Heart right ventricle (tissue), 16 donors: ENCODE measurements at regions of chr16 and their contacts with region 1.

Region 1: DNA sequence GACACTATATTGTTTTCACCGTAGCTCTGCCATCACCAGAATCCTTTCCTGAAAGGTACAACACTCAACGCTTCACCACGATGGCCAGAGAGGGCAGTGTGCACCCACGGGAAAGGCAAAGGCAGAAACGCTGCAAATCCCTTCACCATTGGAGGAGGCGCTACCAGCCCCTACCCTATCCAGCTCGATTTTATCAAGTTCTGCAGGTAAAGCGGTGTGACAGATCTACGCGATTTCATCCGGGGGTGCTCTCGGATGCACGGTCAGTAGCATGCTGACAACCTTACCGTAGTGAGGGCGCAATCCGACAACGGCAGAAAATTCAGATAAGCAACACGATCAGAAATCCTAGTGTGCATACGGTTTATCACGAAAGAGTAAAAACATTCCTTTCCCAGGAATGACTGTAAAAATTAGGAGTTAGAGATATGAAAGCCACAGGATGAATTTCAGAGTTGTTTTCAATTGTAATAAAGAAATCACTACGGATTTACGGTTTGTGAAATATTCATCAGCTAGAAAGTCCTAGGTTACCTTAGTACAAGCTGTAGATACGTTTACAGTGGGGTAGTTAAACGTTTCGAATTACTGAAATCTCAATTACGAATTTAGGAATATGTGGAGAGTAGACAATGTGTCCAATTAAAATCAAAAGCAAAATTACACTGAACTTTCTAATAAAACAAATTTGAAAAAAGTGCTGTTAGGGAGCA is 1.8 kb downstream of the NETO2 start:
- DNase-seq: peak; percentile 77 to 80
- ATAC-seq: peak; percentile 78 to 96 (median 90)
- H3K4me3 ChIP-seq: peak overlapping the region; percentile 13 to 69 (median 60)
- H3K27ac ChIP-seq: peak overlapping the region in 3 of 10 donors; percentile 71 to 82 (median 77)
- H3K4me1 ChIP-seq: peaks cover 0 to 19% (median 6%) of the 10 kb centered on the region in 9 donors
- H3K27me3 ChIP-seq: peaks cover 0 to 16% (median 0%) of the 10 kb centered on the region in 7 donors
- CTCF ChIP-seq: peak; percentile 77 to 98 (median 90)

Region 2: DNA sequence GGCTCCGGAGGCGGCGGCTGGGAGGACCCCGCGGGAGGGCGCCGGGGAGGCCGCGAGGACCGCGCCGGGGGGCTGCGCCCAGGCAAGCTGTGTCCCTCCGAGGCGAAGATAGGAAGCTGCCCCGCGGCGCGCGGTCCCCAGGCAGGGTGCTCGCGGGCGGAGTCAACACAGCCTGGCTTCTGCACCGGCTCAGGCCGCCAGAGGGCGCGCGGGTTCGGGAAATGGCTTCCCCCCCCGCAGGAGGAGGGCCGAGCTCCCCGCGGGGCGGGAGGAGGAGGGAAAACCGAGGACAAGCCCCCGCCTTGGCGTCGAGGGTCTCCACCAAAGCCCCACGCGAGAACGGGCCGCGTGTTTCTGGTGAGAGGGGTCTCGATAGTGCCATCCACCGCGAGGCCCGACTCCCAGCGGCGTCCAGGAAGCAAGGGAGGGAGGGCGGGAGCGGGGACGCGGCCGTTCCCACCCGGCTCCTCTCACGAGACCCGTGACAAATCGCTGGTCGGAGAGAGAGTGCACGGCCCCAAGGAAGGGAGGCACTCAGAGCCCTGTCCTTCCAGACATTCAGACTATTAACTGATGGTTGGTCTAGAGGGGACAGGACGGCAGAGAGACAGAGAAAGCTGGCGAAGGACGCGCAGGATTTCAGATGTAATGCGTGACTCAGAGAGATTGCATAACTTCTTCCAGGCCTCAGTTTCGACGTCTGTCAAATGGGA is 104.0 kb before region 1 on chr16:
- intact Hi-C with region 1: loop called in 6 of 10 experiments (anchors 5 kb)
- DNase-seq: peak; percentile 89 to 94
- ATAC-seq: peak; percentile 96 to 99 (median 98)
- H3K4me3 ChIP-seq: peak overlapping the region; percentile 41 to 77 (median 66)
- H3K27ac ChIP-seq: peak overlapping the region in 7 of 10 donors; percentile 8 to 81 (median 57)
- H3K4me1 ChIP-seq: peaks cover 0 to 13% (median 4%) of the 10 kb centered on the region in 9 donors
- H3K27me3 ChIP-seq: peaks cover 0 to 7% (median 0%) of the 10 kb centered on the region in 7 donors
- CTCF ChIP-seq: peak; percentile 77 to 98 (median 93)

Region 3: GRCh38 chr16:47197536-47198179 is 55.7 kb after region 1 on chr16:
- intact Hi-C with region 1: loop called in 1 of 10 experiments (anchors 2 kb)
- DNase-seq: peak; percentile 51 to 66
- ATAC-seq: peak; percentile 73 to 98 (median 91)
- H3K4me3 ChIP-seq: no peak overlapping the region
- H3K27ac ChIP-seq: no peak overlapping the region
- H3K4me1 ChIP-seq: peaks cover 0 to 16% (median 10%) of the 10 kb centered on the region in 9 donors
- H3K27me3 ChIP-seq: no peaks in the 10 kb centered on the region
- CTCF ChIP-seq: no peak

Region 4: GRCh38 chr16:47460711-47461597 is 319.0 kb after region 1 on chr16 and contains the starts of genes ITFG1 and PHKB:
- intact Hi-C with region 1: loop called in 2 of 10 experiments (anchors 2 to 10 kb)
- DNase-seq: peak; percentile 93
- ATAC-seq: peak; percentile 93 to 97 (median 96)
- H3K4me3 ChIP-seq: peak within 1 kb of the TSS; percentile 53 to 97 (median 88)
- H3K27ac ChIP-seq: peak within 1 kb of the TSS; percentile 98 to 100 (median 99)
- H3K4me1 ChIP-seq: peaks cover 10 to 68% (median 57%) of the 10 kb centered on the region in 9 donors
- H3K27me3 ChIP-seq: no peaks in the 10 kb centered on the region
- CTCF ChIP-seq: peak in 4 of 9 donors; percentile 21 to 31 (median 26)
- total RNA-seq, gene ITFG1: 64.2 to 94.5 (median 75.4) TPM
- total RNA-seq, gene PHKB: 61.2 to 76.6 (median 64.5) TPM

Region 5: DNA sequence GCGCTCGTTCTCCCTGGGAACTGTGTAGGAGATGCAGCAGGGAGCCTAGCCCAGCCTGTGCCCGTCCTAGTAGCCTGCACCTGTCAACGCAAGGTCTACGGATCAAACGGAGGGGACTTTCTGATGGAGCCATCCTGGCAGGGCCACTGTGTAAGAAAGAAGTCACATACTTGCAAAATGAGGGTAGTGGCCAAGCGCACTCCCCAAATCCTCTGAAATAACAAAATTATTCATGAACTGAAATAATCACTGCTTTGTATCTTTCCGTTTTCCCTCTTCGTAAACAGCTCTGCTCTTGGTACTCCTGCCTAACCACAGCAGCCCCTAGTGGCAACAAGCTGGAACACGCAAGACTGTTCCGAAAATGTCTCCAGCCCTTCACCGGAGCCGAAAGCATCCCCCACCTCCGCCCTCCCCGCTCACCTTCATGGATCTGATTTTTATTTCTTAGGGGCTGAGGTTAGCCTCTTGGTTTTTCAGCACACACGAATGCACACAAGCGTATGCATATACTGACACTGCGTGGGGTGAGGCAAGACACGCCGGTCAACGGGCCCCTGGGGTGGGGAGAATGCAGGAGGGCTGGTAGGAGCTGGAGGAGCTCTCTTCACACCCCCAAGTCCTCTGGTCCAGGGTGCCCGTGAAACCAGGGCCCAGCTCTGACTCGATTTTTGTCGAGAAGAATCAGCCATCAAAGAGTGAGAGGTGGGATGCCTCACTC is 913.1 kb after region 1 on chr16:
- intact Hi-C with region 1: loop called in 7 of 10 experiments (anchors 1 to 10 kb)
- DNase-seq: peak; percentile 24 to 47
- ATAC-seq: peak; percentile 47 to 91 (median 76)
- H3K4me3 ChIP-seq: peak overlapping the region in 3 of 10 donors; percentile 16 to 28 (median 20)
- H3K27ac ChIP-seq: no peak overlapping the region
- H3K4me1 ChIP-seq: peaks cover 0 to 24% (median 5%) of the 10 kb centered on the region in 9 donors
- H3K27me3 ChIP-seq: peaks cover 0 to 9% (median 0%) of the 10 kb centered on the region in 7 donors
- CTCF ChIP-seq: peak; percentile 54 to 85 (median 76)

Region 6: DNA sequence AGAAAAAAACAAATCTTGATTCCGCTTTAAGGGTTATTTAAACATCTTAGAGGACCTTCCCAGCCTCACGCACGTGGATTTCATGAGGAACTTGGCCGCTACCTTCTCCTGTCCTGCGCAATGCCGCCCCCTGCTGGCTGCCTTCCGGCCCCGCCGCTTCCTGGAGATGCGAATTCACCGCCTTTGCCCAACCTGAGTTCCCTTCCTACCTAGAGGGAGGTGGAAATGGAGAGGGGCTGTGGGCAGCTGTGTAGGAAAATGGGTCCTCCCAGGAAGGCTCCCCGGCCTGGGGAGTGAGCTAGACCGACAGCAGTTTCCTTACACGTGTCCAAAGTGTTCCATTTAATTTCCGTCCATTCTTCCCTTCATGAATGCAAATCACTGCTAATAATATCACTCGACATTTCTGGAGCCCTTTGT is 1014.9 kb after region 1 on chr16:
- intact Hi-C with region 1: loop called in 9 of 10 experiments (anchors 2 to 5 kb)
- DNase-seq: peak; percentile 87 to 89
- ATAC-seq: peak; percentile 83 to 95 (median 92)
- H3K4me3 ChIP-seq: peak overlapping the region in 5 of 10 donors; percentile 5 to 31 (median 21)
- H3K27ac ChIP-seq: peak overlapping the region in 7 of 10 donors; percentile 54 to 70 (median 62)
- H3K4me1 ChIP-seq: peaks cover 4 to 25% (median 10%) of the 10 kb centered on the region in 9 donors
- H3K27me3 ChIP-seq: peaks cover 0 to 8% (median 0%) of the 10 kb centered on the region in 7 donors
- CTCF ChIP-seq: peak; percentile 94 to 99 (median 98)